Endothelial cell of umbilical vein (primary cell): ENCODE measurements at regions of chr3 and their contacts with region 1.

Region 1: GRCh38 chr3:58188173-58188564 is 22.6 kb downstream of the DNASE1L3 start:
- DNase-seq: no peak
- H3K4me3 ChIP-seq: no peak overlapping the region
- H3K27ac ChIP-seq: no peak overlapping the region
- H3K4me1 ChIP-seq: no peaks in the 10 kb centered on the region
- H3K27me3 ChIP-seq: no peaks in the 10 kb centered on the region
- CTCF ChIP-seq: no peak
- POLR2A ChIP-seq: no peak

Region 2: GRCh38 chr3:57983734-57984518 is 204.2 kb before region 1 on chr3:
- CTCF ChIA-PET with region 1: no interaction called
- POLR2A ChIA-PET with region 1: no interaction called
- dilution Hi-C with region 1: no loop called
- intact Hi-C with region 1: no loop called
- DNase-seq: peak; percentile 81
- H3K4me3 ChIP-seq: no peak overlapping the region
- H3K27ac ChIP-seq: peak overlapping the region; percentile 56
- H3K4me1 ChIP-seq: peaks cover 14% of the 10 kb centered on the region
- H3K27me3 ChIP-seq: no peaks in the 10 kb centered on the region
- CTCF ChIP-seq: no peak
- POLR2A ChIP-seq: no peak

Region 3: GRCh38 chr3:58144478-58145325 is 43.5 kb before region 1 on chr3:
- CTCF ChIA-PET with region 1: no interaction called
- POLR2A ChIA-PET with region 1: no interaction called
- dilution Hi-C with region 1: no loop called
- intact Hi-C with region 1: no loop called
- DNase-seq: no peak
- H3K4me3 ChIP-seq: no peak overlapping the region
- H3K27ac ChIP-seq: no peak overlapping the region
- H3K4me1 ChIP-seq: no peaks in the 10 kb centered on the region
- H3K27me3 ChIP-seq: no peaks in the 10 kb centered on the region
- CTCF ChIP-seq: no peak
- POLR2A ChIP-seq: no peak

Region 4: GRCh38 chr3:58206406-58207011 is 18.3 kb after region 1 on chr3:
- CTCF ChIA-PET with region 1: interaction called, 72 read pairs
- POLR2A ChIA-PET with region 1: no interaction called
- dilution Hi-C with region 1: no loop called
- intact Hi-C with region 1: no loop called
- DNase-seq: no peak
- H3K4me3 ChIP-seq: no peak overlapping the region
- H3K27ac ChIP-seq: no peak overlapping the region
- H3K4me1 ChIP-seq: peaks cover 3% of the 10 kb centered on the region
- H3K27me3 ChIP-seq: no peaks in the 10 kb centered on the region
- CTCF ChIP-seq: no peak
- POLR2A ChIP-seq: no peak

Region 5: GRCh38 chr3:58237238-58237940 is 49.2 kb after region 1 on chr3 and contains the start of gene ABHD6:
- CTCF ChIA-PET with region 1: interaction called, 12 read pairs
- POLR2A ChIA-PET with region 1: no interaction called
- dilution Hi-C with region 1: no loop called
- intact Hi-C with region 1: no loop called
- DNase-seq: peak; percentile 66
- H3K4me3 ChIP-seq: peak within 1 kb of the TSS; percentile 65 to 73 (median 71)
- H3K27ac ChIP-seq: peak within 1 kb of the TSS; percentile 25
- H3K4me1 ChIP-seq: peaks cover 6% of the 10 kb centered on the region
- H3K27me3 ChIP-seq: peaks cover 4 to 6% of the 10 kb centered on the region in 2 experiments
- CTCF ChIP-seq: peak in 1 of 2 donors; percentile 17
- POLR2A ChIP-seq: peak; percentile 41
- total RNA-seq, gene ABHD6: 5.4 and 5.8 TPM in 2 replicates

Region 6: GRCh38 chr3:58293516-58293915 is 105.3 kb after region 1 on chr3:
- CTCF ChIA-PET with region 1: interaction called, 369 read pairs
- POLR2A ChIA-PET with region 1: interaction called, 5 read pairs
- dilution Hi-C with region 1: no loop called
- intact Hi-C with region 1: no loop called
- DNase-seq: no peak
- H3K4me3 ChIP-seq: no peak overlapping the region
- H3K27ac ChIP-seq: no peak overlapping the region
- H3K4me1 ChIP-seq: no peaks in the 10 kb centered on the region
- H3K27me3 ChIP-seq: peaks cover 0 to 4% of the 10 kb centered on the region in 2 experiments
- CTCF ChIP-seq: no peak
- POLR2A ChIP-seq: no peak

Region 7: DNA sequence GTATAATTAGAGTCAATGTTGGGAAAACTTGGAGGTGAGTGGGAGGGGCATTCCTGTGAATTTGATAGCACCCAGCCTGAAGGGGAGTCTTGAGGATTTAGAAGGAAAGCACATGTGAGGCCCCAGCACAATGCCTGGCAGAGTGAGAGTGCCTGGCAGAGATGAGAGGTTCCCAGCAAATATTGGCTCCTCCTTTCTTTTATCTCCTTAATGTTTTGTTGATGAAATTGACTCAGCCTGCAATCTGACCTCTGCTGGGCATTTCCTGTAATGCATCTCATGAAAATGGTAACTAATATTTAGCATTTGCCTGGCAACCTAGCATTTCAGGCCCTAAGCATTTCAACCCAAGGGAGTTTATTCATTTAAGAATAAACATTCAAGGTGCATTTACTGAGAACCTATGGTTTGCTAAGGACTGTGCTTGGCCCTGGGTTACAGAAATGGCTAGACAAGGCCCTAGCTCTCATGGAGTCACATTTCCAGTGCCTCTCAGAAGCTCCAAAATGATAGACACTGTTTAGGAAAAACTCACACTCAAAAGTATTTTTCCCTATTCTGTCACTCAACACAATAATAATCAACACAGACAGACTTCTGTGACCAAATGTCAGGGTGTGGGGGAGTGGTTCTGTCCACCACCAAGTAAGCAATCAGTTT is 226.5 kb after region 1 on chr3:
- CTCF ChIA-PET with region 1: interaction called, 12 read pairs
- POLR2A ChIA-PET with region 1: no interaction called
- dilution Hi-C with region 1: no loop called
- intact Hi-C with region 1: loop called (anchors 1 kb)
- DNase-seq: peak; percentile 79
- H3K4me3 ChIP-seq: no peak overlapping the region
- H3K27ac ChIP-seq: no peak overlapping the region
- H3K4me1 ChIP-seq: no peaks in the 10 kb centered on the region
- H3K27me3 ChIP-seq: no peaks in the 10 kb centered on the region
- CTCF ChIP-seq: peak; percentile 64
- POLR2A ChIP-seq: no peak

Region 8: DNA sequence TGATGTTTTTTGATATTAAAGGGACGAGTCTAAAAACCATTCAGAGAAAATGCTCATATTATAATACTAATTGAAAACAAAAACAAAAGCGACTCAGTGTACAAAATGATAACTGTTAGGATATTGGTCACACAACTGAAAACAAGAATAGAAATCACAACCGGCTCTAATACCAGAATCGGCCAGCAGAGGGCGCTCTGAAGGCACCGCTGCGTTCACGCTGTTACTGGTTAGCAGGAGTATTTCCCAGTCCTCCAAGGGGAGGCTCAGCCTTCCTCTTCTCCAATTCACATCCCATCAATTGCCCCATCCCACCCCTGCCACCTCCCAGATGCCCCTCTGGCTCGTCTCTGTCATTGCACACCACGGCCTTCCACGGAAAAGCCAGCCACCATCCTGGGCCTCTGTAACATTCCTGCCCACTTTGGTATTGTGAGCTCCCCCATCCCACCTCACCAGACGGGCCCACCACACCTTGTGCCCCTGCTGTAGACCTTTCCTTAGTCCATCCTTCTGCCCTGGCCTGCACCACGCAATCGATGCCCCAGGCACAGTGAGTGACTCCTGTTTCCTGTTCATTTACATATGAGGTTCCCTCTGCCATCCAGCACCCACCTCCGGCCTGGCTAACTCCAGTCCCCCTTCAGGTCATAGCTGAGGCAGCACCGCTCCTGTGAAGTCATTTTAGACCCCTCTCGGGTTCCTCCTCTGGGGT is 380.6 kb after region 1 on chr3:
- CTCF ChIA-PET with region 1: no interaction called
- POLR2A ChIA-PET with region 1: no interaction called
- dilution Hi-C with region 1: no loop called
- intact Hi-C with region 1: no loop called
- DNase-seq: peak; percentile 83
- H3K4me3 ChIP-seq: no peak overlapping the region
- H3K27ac ChIP-seq: no peak overlapping the region
- H3K4me1 ChIP-seq: peaks cover 24% of the 10 kb centered on the region
- H3K27me3 ChIP-seq: no peaks in the 10 kb centered on the region
- CTCF ChIP-seq: peak; percentile 84 to 88
- POLR2A ChIP-seq: no peak